Posterior vena cava (tissue), 2 donors: ENCODE measurements at regions of chr19 and their contacts with region 1.

Region 1: GRCh38 chr19:11169896-11170678 is 14.5 kb upstream of the SPC24 start:
- DNase-seq: no peak

Region 2: GRCh38 chr19:11234486-11235075 is 64.5 kb after region 1 on chr19:
- intact Hi-C with region 1: no loop called
- DNase-seq: no peak

Region 3: DNA sequence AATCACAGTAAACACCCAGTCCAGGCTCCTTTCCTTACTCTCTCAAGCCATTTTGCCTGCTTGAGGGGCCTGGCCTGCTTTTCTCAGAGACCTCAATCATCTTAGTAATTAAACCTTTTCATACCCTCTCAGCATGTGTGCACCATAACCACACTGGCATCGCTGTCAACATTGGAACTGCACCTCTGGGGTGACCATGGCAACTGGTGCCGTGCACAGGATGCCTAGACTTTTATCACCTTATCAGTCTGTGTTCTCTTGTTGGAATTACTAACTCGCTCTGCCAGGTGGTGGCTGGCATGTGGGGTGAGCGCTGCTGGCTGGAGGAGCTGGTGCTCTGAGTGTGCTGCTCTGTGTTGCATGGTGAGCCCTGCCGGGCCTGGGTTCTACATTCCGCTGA is 1332.1 kb after region 1 on chr19:
- intact Hi-C with region 1: loop called in 1 of 2 experiments (anchors 5 kb)
- DNase-seq: no peak